ENCODE measurements at regions of chr21 and their contacts with region 1.

Region 1: DNA sequence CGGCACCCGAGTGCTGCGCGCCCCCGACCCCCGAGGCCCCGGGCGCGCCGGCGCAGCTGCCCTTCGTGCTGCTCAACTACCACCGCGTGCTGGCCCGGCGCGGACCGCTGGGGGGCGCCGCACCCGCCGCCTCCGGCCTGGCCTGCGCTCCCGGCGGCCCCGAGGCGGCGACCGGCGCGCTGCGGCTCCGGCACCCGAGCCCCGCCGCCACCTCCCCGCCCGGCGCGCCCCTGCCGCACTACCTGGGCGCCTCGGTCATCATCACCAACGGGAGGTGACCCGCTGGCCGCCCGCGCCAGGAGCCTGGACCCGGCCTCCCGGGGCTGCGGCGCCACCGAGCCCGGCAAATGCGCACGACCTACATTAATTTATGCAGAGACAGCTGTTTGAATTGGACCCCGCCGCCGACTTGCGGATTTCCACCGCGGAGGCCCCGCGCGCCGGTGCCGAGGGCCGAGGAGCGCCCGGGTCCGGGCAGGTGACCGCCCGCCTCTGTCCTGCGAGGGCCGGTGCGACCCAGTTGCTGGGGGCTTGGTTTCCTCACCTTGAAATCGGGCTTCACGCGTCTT is 49.0 kb downstream of the SIM2 start:
- DNase-seq: peak in 8 of 10 donors; percentile 37 to 96 (median 63)

Region 2: GRCh38 chr21:35664683-35665082 is 1083.2 kb before region 1 on chr21:
- intact Hi-C with region 1: no loop called
- DNase-seq: no peak

Region 3: DNA sequence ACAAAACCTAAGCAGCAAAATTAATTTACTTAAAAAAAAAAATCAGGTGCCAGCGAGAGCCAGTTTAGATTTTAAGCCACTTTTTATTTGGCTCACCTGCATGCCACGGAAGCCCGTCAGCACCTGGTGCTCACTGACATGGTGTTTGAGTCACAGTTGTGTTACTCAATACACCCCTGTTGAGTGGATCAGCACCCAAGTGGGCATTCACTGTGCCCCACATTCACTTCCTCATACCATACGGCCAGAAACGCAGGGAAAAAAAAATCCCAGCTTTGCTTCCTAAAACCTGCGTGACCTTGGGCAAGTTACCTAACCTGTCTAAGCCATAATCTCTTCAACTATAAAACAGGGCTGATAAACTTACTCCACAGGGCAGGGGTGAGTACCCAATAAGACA is 91.8 kb before region 1 on chr21:
- intact Hi-C with region 1: loop called (anchors 10 kb)
- DNase-seq: no peak

Region 4: GRCh38 chr21:36718951-36719501 is 28.9 kb before region 1 on chr21:
- intact Hi-C with region 1: no loop called
- DNase-seq: peak; percentile 40 to 96 (median 74)

Region 5: GRCh38 chr21:36820176-36821031 is 72.5 kb after region 1 on chr21:
- intact Hi-C with region 1: no loop called
- DNase-seq: no peak

Region 6: GRCh38 chr21:36854391-36854790 is 106.5 kb after region 1 on chr21:
- intact Hi-C with region 1: loop called (anchors 2 kb)
- DNase-seq: peak in 5 of 10 donors; percentile 39 to 77 (median 48)